Activated naive CD4-positive, alpha-beta T cell treated with anti-CD3 and anti-CD28 coated beads for 36 hours (primary cell): ENCODE measurements at regions of chr6 and their contacts with region 1.

Region 1: DNA sequence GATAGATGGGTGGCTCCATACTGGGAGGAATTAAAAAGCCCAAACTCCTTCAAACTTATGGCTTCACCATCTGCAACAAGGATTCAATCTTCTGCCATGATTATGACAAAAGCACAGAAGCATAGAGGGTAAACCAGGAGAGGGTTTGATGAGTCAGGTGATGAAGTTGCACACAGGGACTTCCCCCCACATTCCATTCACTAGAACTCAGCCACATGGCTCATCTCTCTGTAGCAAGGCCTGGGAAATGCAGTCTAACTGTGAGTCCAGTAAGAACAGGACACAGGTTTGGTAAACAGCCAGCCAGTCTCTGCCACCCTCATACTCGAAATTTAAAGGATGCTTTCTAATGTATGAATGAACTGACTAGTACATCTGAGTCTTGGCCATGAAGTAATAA is 142.9 kb downstream of the HIVEP2 start:
- DNase-seq: peak; percentile 73
- H3K4me3 Mint-ChIP-seq: no peak overlapping the region
- H3K27ac Mint-ChIP-seq: peak overlapping the region; percentile 88
- H3K4me1 Mint-ChIP-seq: peaks cover 94% of the 10 kb centered on the region
- H3K27me3 Mint-ChIP-seq: no peaks in the 10 kb centered on the region

Region 2: GRCh38 chr6:142773859-142774648 is 28.1 kb before region 1 on chr6:
- CTCF ChIA-PET with region 1: interaction called, 4 read pairs
- intact Hi-C with region 1: loop called (anchors 1 kb)
- DNase-seq: peak; percentile 46
- H3K4me3 Mint-ChIP-seq: no peak overlapping the region
- H3K27ac Mint-ChIP-seq: peak overlapping the region; percentile 79
- H3K4me1 Mint-ChIP-seq: peaks cover 59% of the 10 kb centered on the region
- H3K27me3 Mint-ChIP-seq: no peaks in the 10 kb centered on the region

Region 3: DNA sequence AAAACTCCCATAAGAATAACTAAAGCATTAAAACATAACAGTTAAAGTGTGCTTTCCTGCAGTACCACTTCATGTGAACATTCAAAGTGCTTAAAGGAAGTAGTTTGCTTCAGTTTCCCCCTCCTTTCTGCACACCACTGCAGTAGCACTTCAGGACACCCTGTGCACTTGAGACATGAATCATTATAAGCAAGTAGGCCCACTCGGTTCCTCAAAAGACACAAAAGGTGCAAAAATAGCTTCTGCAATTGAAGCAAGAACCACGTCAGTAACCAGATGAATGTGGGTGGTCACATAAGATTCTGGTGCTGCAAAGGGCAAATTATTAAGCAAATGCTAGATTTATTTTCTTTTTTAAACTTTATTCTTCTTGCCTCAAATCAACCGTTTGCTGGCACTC is 17.8 kb before region 1 on chr6:
- CTCF ChIA-PET with region 1: no interaction called
- intact Hi-C with region 1: loop called (anchors 1 kb)
- DNase-seq: peak; percentile 50
- H3K4me3 Mint-ChIP-seq: no peak overlapping the region
- H3K27ac Mint-ChIP-seq: peak overlapping the region; percentile 76
- H3K4me1 Mint-ChIP-seq: peaks cover 71% of the 10 kb centered on the region
- H3K27me3 Mint-ChIP-seq: no peaks in the 10 kb centered on the region

Region 4: GRCh38 chr6:142833054-142833453 is 30.9 kb after region 1 on chr6:
- CTCF ChIA-PET with region 1: interaction called, 3 read pairs
- intact Hi-C with region 1: loop called (anchors 1 kb)
- DNase-seq: peak; percentile 75
- H3K4me3 Mint-ChIP-seq: no peak overlapping the region
- H3K27ac Mint-ChIP-seq: peak overlapping the region; percentile 81
- H3K4me1 Mint-ChIP-seq: peaks cover 84% of the 10 kb centered on the region
- H3K27me3 Mint-ChIP-seq: no peaks in the 10 kb centered on the region